WTC11 (cell line): ENCODE measurements at regions of chr20 and their contacts with region 1.

Region 1: GRCh38 chr20:59222253-59223181 is 58.9 kb downstream of the ZNF831 start:
- DNase-seq: peak; percentile 93
- ATAC-seq: peak; percentile 88
- H3K4me3 Mint-ChIP-seq: peak overlapping the region; percentile 80
- H3K27ac Mint-ChIP-seq: no peak overlapping the region
- H3K4me1 Mint-ChIP-seq: peaks cover 38% of the 10 kb centered on the region
- H3K27me3 Mint-ChIP-seq: peaks cover 55% of the 10 kb centered on the region
- CTCF ChIP-seq: peak; percentile 86

Region 2: DNA sequence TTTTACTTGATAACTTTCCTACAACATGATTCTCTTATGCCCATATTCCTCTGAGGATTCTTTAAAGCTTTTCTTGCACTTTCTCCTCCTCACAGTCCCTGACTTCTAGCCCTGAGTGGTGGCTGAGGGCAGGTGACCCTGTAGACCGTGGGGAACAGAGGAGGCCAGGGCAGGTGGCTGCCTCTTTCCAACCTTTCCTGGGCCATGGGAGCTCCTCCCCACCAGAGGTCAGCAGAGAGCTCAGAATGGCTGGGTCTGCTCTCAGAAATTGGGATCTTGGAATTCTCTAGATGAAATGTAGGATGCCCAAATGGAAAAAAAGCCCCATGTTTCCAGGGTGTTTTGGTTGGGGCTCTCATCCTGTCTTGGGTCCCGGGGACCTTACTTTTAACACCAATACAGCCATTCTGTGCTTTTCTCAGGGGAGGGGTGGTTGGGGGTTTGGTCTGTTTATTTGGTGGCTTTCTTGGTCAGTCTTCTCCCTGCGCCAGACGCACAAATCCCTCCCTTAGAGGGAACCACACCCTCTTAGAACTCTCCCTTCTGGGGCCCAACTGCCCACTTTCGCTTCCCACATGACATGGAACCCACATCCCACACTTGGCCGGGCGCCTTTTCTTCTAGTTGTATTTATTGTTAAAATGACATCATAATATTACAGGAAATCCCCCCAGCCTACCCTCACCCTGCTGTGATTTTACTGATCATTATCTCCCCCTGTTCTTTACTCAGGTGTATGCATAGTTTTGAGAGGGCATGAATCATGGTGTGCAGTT is 352.1 kb before region 1 on chr20:
- CTCF ChIA-PET with region 1: interaction called, 18 read pairs
- POLR2A ChIA-PET with region 1: no interaction called
- DNase-seq: peak; percentile 83
- ATAC-seq: peak; percentile 91
- H3K4me3 Mint-ChIP-seq: no peak overlapping the region
- H3K27ac Mint-ChIP-seq: no peak overlapping the region
- H3K4me1 Mint-ChIP-seq: peaks cover 32% of the 10 kb centered on the region
- H3K27me3 Mint-ChIP-seq: no peaks in the 10 kb centered on the region
- CTCF ChIP-seq: peak; percentile 76

Region 3: DNA sequence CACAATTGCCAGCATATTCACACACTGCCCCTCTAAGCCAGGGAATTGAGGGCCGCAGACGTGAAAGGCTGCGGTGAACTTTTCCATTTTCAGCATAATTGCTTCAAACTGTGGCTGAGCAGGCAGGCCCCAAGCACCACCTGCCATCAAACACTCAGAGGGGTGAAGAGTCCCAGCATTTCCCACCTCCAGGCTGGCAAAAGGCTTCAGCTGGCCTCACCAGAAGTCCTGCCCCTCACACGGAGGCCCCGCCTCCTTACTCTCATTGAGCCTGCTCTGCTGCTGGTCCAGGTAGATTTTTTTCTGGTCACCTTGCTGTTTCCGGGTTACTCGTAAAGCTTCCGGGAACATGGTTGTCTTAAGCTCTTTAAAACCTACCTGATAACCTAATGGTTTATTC is 127.9 kb before region 1 on chr20:
- CTCF ChIA-PET with region 1: interaction called, 12 read pairs
- POLR2A ChIA-PET with region 1: no interaction called
- DNase-seq: peak; percentile 44
- ATAC-seq: peak; percentile 97
- H3K4me3 Mint-ChIP-seq: no peak overlapping the region
- H3K27ac Mint-ChIP-seq: no peak overlapping the region
- H3K4me1 Mint-ChIP-seq: peaks cover 6% of the 10 kb centered on the region; the same call in 1 of the 2 replicates
- H3K27me3 Mint-ChIP-seq: peaks cover 3% of the 10 kb centered on the region
- CTCF ChIP-seq: no peak

Region 4: DNA sequence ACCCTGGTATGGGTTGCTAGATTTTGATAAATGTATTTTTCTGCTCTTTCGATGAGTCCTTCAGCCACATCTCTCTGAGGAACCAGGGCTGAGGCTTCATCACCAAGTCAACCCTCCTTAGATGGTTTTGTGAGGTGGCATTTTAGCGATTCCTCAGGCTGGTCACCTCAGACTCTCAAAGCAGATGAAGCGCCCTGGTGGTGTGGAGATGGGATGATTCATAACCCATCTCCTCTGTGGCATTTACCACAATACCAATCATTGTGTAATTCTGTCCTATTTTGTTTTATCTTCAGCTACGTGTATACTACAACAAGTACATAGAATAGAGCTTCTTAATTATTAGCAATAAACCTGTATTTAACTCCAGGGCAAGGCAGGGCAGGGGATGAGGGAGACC is 20.2 kb after region 1 on chr20:
- CTCF ChIA-PET with region 1: interaction called, 10 read pairs
- POLR2A ChIA-PET with region 1: no interaction called
- DNase-seq: no peak
- ATAC-seq: no peak
- H3K4me3 Mint-ChIP-seq: no peak overlapping the region
- H3K27ac Mint-ChIP-seq: no peak overlapping the region; the same call in 1 of the 2 replicates
- H3K4me1 Mint-ChIP-seq: peaks cover 42% of the 10 kb centered on the region
- H3K27me3 Mint-ChIP-seq: 0 out of 2 replicates have a peak, but pooled peaks cover 3% of the 10 kb centered on the region
- CTCF ChIP-seq: no peak

Region 5: DNA sequence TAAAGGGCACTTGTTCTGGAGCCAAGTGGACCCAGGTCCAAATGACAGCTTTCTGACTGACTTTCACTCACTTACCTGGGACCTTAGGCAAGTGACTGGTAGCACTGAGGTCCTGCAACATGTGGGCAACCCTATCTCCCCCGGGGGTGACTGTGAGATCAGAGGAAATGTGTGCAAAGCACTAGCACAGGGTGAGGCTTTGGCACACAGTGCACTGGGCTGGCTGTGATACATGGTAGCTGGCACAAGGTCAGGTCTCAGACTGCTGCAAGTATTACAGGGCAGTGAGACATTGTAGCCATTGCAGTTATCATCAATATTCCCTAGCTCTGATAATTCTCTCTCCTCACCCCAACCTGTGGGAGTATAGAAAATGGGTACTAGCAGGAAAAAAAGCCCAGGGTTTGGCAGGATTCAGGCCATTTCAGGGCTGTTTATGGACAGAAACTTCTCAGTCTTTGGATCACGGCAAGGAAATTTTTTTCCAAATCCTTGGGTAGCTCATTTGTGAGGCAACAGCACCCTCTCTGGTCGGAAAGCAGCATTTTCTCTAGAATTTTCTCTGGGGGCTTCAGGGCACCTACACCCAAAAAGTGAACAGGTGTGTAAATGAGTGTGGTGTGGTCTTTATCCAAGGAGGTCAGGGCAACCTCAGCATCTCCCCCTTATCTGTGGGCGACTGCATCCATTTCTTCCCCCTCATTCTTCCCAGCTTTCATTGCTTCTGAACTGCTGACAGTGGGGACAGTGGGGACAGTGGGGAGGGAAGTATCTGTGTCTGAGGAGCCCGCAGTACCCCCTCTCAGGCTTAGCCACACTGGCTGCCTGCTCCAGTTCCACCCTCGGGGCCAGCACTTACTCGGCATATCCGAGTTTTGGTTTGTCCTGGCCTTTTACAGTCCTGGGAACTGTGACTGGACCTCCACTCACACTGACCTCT is 233.2 kb after region 1 on chr20:
- CTCF ChIA-PET with region 1: interaction called, 14 read pairs
- POLR2A ChIA-PET with region 1: no interaction called
- DNase-seq: no peak
- ATAC-seq: peak; percentile 57
- H3K4me3 Mint-ChIP-seq: no peak overlapping the region
- H3K27ac Mint-ChIP-seq: no peak overlapping the region
- H3K4me1 Mint-ChIP-seq: peaks cover 12% of the 10 kb centered on the region; the same call in 1 of the 2 replicates
- H3K27me3 Mint-ChIP-seq: peaks cover 7% of the 10 kb centered on the region
- CTCF ChIP-seq: peak; percentile 45; the same call in 1 of the 2 replicates